ENCODE measurements at regions of chr5 and their contacts with region 1.

Region 1: DNA sequence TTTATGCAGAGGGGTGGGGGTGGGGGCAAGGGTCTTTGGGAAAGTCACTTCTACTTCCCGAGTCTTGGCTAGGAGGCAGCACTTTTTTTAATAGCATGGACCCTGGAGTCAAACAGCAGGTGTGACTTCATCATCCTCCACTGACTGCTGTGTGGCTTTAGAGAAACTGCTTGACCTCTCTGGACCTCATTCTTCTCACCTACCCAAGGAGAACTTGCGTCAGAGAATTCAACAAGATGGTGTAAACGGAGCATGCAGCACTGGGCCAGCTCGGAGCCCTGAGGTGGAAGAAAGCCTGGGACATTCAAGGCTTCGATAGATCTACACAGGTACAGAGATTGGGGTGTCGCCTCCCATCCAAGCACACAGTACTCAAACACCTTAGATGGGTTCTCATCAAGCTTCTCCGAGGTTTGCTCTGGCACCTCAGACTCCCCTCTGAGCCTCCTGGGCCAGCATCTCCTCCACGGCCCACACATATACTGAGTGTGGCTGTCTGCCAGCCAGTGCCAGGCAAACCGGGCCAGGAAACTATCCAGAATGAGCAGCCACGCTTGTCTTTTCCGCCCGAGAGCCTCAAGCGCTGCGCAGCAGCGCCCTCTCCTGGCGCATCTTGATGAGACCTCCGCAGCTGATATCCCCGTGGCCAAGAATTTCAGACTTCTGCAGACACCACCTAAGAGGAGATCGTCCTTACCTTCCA is 4.6 kb upstream of the SLC25A48 start:
- DNase-seq: peak; percentile 67 to 97 (median 84)

Region 2: DNA sequence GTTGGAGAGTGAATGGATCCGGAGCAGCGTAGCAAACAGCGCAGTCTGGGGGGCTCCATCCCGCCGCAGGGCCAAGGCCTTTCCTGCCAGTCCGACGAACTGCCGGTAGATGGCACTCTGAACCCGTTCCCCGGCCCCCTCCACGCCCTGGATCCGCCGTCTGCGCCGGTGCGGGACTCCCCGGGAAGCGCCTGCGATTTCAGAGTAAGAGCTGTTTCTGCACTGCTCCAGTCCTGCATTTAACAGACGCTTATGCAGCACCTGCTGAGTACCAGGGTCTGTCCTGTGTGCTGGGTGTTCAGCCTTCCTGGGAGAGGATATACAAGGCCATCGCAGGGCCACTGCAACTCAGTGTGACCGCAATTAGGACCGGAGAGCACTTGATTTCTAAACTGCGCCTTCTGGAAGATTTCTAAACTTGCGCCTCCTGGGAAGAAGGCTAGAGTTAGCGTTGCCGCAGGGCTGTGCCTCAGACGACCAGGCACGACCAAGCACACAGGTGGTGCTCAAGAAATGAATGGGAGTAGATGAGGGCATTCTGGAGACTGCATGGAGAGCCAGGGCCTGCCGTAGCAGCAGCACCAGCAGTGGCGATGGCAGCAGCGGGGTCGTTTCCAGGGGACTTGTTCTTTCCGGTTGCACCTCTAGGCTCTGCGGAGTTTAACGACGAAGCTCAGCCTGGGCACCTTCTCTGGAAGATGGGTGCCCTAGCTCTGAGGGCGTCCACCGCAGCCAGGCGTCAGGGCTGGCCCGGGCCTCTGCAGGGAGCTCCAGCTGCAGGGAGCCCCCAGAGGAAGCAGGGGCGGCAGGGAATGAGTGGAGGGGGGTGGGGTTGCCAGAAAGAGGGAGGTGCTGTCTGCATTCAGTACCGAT is 363.4 kb before region 1 on chr5:
- intact Hi-C with region 1: loop called (anchors 5 kb)
- DNase-seq: peak; percentile 76 to 97 (median 84)

Region 3: DNA sequence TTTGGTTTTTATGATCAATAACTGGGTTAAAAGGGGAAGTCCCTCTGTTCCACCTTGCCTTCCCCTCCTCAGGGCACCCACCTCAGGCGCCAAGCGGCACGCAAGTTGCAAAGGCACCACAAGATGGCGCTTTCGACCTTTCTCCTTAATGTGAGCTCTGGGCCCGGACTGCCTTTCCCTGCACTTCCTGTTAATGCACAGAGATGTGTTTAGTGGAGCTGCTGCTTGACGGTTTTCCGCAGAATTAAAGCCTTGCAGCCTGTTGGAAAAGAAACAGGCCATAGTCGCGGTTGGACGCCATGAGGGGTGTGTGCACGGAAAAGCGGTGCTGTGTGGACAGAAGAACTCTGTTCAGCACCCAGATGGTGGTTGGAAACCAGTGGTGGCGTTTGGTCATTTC is 269.0 kb before region 1 on chr5:
- intact Hi-C with region 1: loop called (anchors 2 kb)
- DNase-seq: peak; percentile 60 to 97 (median 86)

Region 4: GRCh38 chr5:135880278-135880677 is 50.4 kb after region 1 on chr5:
- intact Hi-C with region 1: loop called (anchors 5 kb)
- DNase-seq: no peak